ENCODE measurements at regions of chr9 and their contacts with region 1.

Region 1: DNA sequence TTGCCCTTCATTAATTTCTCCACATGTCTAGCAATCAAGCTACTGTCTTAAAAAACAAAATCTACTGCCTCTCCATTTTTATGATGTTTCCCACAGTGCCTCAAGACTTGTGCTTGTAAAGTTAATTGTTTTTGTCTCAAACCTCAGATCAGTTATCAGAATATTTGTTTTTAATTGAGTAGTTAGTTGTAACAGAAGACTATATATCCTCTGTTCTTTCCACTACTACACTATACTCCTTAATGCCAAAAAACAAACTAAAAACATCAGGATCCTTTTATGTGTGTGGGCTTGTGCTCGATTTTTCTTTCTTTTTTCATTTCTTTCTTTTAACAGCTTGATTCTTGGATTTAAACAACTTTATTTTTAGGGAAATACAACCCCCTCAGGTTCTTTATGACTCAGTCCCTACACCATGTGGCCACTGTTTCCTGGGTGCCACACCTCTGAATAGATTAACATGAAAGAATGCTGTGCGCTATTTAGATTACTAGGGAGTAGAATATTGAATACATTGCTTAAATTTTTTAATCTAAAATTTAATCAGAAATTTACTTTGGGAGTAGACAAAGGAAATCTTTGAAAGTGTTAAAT is 1.2 kb downstream of the ASPN start:
- DNase-seq: no peak
- H3K4me3 ChIP-seq: peak overlapping the region; percentile 35 to 51
- H3K27ac ChIP-seq: peak overlapping the region; percentile 90 to 92
- H3K4me1 ChIP-seq: peaks cover 0 to 37% of the 10 kb centered on the region in 2 donors
- H3K27me3 ChIP-seq: no peaks in the 10 kb centered on the region
- CTCF ChIP-seq: no peak

Region 2: GRCh38 chr9:92463984-92464383 is 17.2 kb before region 1 on chr9:
- intact Hi-C with region 1: loop called (anchors 2 kb)
- DNase-seq: peak in 1 of 2 donors; percentile 73
- H3K4me3 ChIP-seq: no peak overlapping the region
- H3K27ac ChIP-seq: peak overlapping the region; percentile 94 to 95
- H3K4me1 ChIP-seq: peaks cover 3 to 22% of the 10 kb centered on the region in 2 donors
- H3K27me3 ChIP-seq: no peaks in the 10 kb centered on the region
- CTCF ChIP-seq: no peak

Region 3: DNA sequence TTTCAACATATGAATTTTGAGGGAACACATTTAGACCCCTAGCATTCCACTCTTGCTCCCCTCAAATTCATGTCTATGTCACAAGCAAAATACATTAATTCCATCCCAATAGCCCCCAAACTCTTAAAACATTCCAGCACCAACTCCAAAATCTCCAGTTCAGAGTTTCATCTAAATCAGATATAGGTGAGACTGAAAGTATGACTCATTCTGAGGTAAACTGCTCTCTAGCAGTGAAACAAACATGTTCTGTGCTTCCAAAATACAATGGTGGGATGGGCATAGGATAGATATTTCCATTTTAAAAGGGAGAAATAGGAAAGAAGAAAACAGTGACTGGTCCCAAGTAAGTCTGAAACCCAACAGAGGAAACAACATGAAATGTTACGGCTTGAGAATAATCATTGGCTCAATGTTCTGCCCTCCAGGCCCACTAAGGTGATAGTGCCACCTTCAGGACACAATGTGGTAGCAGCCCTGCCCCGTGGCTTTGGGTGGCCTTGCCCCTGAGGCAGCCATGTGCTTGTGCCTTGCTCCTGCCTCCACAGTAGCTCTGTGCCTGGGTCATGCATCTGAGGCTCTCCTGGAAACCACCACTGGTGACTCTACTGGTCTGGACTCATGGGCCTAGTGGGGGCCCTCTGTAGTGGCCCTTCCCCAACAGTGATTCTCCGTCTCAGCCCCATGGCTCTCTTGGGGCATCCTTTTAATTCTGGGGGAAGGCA is 225.2 kb after region 1 on chr9:
- intact Hi-C with region 1: no loop called
- DNase-seq: peak in 1 of 2 donors; percentile 42
- H3K4me3 ChIP-seq: no peak overlapping the region
- H3K27ac ChIP-seq: no peak overlapping the region
- H3K4me1 ChIP-seq: no peaks in the 10 kb centered on the region
- H3K27me3 ChIP-seq: no peaks in the 10 kb centered on the region
- CTCF ChIP-seq: peak in 1 of 3 experiments; percentile 22

Measured in ascending aorta (tissue), 2 donors.